ENCODE measurements at regions of chr11 and their contacts with region 1.

Region 1: DNA sequence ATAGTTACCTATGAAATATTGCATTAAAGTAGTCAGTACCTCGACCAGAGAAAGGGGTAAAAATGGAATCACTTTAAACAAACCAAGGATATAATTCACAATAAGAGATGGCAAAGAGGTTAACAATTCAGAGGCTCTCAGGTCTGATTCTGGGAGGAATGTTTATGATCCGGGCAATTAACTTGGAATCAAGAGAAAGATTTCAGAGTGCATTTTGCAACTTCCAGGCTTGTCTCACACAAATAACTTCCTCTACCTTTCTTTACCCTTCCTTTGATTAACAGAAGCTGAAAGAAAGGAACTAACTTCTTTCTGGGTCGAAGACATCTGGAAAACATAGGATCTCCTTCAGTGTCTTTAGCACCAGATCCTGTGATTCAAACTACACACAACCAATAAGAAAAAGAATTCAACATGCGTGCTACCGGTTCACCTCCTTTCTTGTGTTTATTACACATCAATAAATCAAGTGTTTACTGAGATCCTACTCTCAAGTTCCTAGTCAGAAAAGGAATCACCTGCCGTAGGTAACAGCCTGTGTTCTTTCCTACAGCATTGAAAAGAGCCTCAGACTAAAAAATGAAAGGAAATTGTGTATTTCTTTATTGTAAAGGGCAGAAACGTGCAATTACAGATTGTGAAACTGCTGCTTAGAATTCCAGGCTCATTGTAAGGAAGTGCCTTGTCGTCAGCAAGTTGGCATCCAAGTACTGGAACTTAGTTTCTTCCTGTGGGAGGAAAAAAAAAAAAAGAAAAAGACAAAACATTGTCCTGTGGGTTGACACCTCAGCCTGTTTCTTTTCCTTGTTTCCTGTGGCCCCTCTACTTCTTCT is 29.5 kb downstream of the CARD18 start:
- DNase-seq: no peak
- ATAC-seq: no peak

Region 2: DNA sequence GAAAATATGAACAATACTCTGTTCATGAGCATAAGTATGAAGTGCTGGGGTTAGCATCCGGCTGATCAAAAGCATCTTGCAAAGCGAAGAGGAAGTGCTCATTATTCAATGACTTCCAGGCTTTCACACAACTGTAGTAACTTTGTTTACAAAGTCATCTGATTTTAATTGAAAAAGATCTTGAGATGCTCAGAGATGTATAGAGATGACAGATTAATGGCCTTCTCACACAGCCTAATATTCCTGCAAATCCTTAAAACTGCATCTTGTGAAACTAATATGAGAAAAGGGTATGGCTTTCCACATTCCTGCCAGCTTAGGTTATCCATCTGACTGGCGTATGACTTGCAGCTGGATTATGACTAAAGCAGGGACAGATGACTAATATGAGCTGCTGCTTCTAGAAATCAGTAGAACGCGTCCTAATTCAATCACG is 337.2 kb before region 1 on chr11:
- intact Hi-C with region 1: no loop called
- DNase-seq: no peak
- ATAC-seq: peak; percentile 60

Region 3: GRCh38 chr11:105219269-105219668 is 109.2 kb after region 1 on chr11:
- intact Hi-C with region 1: loop called (anchors 10 kb)
- DNase-seq: no peak
- ATAC-seq: no peak